ENCODE measurements at regions of chr10 and their contacts with region 1.

Region 1: GRCh38 chr10:26437637-26438461 is at the start of gene APBB1IP:
- DNase-seq: peak; percentile 70
- H3K4me3 Mint-ChIP-seq: peak within 1 kb of the TSS; percentile 88
- H3K27ac Mint-ChIP-seq: peak within 1 kb of the TSS; percentile 89
- H3K4me1 Mint-ChIP-seq: peaks cover 42% of the 10 kb centered on the region
- H3K27me3 Mint-ChIP-seq: peaks cover 1% of the 10 kb centered on the region
- total RNA-seq, gene APBB1IP: 80.9 to 82.2 TPM

Region 2: GRCh38 chr10:26448706-26449435 is 11.0 kb after region 1 on chr10:
- CTCF ChIA-PET with region 1: no interaction called
- POLR2A ChIA-PET with region 1: interaction called, 15 read pairs
- DNase-seq: peak; percentile 87
- H3K4me3 Mint-ChIP-seq: peak overlapping the region; percentile 54
- H3K27ac Mint-ChIP-seq: peak overlapping the region; percentile 86
- H3K4me1 Mint-ChIP-seq: peaks cover 72% of the 10 kb centered on the region
- H3K27me3 Mint-ChIP-seq: no peaks in the 10 kb centered on the region

Region 3: GRCh38 chr10:26468700-26469099 is 30.9 kb after region 1 on chr10:
- CTCF ChIA-PET with region 1: interaction called, 3 read pairs
- POLR2A ChIA-PET with region 1: interaction called, 14 read pairs
- DNase-seq: peak; percentile 57
- H3K4me3 Mint-ChIP-seq: no peak overlapping the region
- H3K27ac Mint-ChIP-seq: peak overlapping the region; percentile 75
- H3K4me1 Mint-ChIP-seq: peaks cover 69% of the 10 kb centered on the region
- H3K27me3 Mint-ChIP-seq: no peaks in the 10 kb centered on the region

Region 4: GRCh38 chr10:26475386-26475785 is 37.5 kb after region 1 on chr10:
- CTCF ChIA-PET with region 1: interaction called, 3 read pairs
- POLR2A ChIA-PET with region 1: interaction called, 57 read pairs
- DNase-seq: no peak
- H3K4me3 Mint-ChIP-seq: peak overlapping the region; percentile 61
- H3K27ac Mint-ChIP-seq: peak overlapping the region; percentile 90
- H3K4me1 Mint-ChIP-seq: peaks cover 77% of the 10 kb centered on the region
- H3K27me3 Mint-ChIP-seq: no peaks in the 10 kb centered on the region

Region 5: DNA sequence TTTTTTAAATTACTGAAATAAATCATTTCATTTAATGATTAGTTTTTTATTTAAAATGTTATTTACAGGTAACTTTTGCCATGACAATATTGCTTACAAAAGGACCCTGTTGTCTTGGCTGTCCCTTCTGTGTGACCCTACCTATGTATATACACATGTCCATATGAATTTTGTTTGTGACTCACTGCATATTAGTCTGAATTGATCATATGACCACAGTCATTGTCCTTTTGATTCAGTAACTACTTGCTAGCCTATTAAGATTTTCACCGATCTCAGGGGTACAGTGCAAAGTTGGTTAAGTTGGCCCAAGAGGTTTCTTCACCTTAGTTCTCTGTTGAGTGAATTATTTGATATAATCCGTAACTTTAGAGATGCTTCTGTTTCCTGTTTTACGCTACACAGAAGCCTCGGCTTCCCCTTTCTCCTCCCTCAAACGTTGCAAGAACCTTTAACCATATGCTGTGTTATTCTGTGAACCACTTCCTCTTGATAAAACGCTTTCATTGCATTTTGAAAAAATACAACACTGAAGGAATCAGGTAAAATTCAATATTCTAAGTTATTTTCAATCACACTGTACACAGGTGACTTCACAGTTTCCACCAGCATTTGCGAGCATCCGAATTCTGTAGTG is 44.2 kb after region 1 on chr10:
- CTCF ChIA-PET with region 1: interaction called, 3 read pairs
- POLR2A ChIA-PET with region 1: interaction called, 57 read pairs
- DNase-seq: peak; percentile 51
- H3K4me3 Mint-ChIP-seq: peak overlapping the region; percentile 49
- H3K27ac Mint-ChIP-seq: peak overlapping the region; percentile 90
- H3K4me1 Mint-ChIP-seq: peaks cover 76% of the 10 kb centered on the region
- H3K27me3 Mint-ChIP-seq: no peaks in the 10 kb centered on the region

Region 6: GRCh38 chr10:26486991-26487850 is 49.4 kb after region 1 on chr10:
- CTCF ChIA-PET with region 1: interaction called, 3 read pairs
- POLR2A ChIA-PET with region 1: interaction called, 57 read pairs
- DNase-seq: peak; percentile 74
- H3K4me3 Mint-ChIP-seq: peak overlapping the region; percentile 64
- H3K27ac Mint-ChIP-seq: peak overlapping the region; percentile 94
- H3K4me1 Mint-ChIP-seq: peaks cover 56% of the 10 kb centered on the region
- H3K27me3 Mint-ChIP-seq: no peaks in the 10 kb centered on the region

Region 7: GRCh38 chr10:26574783-26575182 is 136.9 kb after region 1 on chr10:
- CTCF ChIA-PET with region 1: no interaction called
- POLR2A ChIA-PET with region 1: no interaction called
- DNase-seq: no peak
- H3K4me3 Mint-ChIP-seq: no peak overlapping the region
- H3K27ac Mint-ChIP-seq: no peak overlapping the region
- H3K4me1 Mint-ChIP-seq: peaks cover 4% of the 10 kb centered on the region
- H3K27me3 Mint-ChIP-seq: no peaks in the 10 kb centered on the region